ENCODE measurements at regions of chr2 and their contacts with region 1.

Region 1: GRCh38 chr2:38740851-38741731 is 10.1 kb downstream of the SRSF7 start:
- DNase-seq: no peak
- ATAC-seq: peak in 6 of 8 donors; percentile 12 to 47 (median 26)
- H3K4me3 ChIP-seq: peak overlapping the region in 1 of 10 donors; percentile 9
- H3K27ac ChIP-seq: peak overlapping the region in 5 of 10 donors; percentile 14 to 40 (median 38)
- H3K4me1 ChIP-seq: peaks cover 0 to 58% (median 37%) of the 10 kb centered on the region in 9 donors
- H3K27me3 ChIP-seq: no peaks in the 10 kb centered on the region
- CTCF ChIP-seq: peak; percentile 48 to 76 (median 64)

Region 2: GRCh38 chr2:38672445-38673391 is 68.4 kb before region 1 on chr2:
- intact Hi-C with region 1: loop called in 1 of 10 experiments (anchors 5 kb)
- DNase-seq: no peak
- ATAC-seq: no peak
- H3K4me3 ChIP-seq: no peak overlapping the region
- H3K27ac ChIP-seq: no peak overlapping the region
- H3K4me1 ChIP-seq: peaks cover 0 to 31% (median 0%) of the 10 kb centered on the region in 9 donors
- H3K27me3 ChIP-seq: no peaks in the 10 kb centered on the region
- CTCF ChIP-seq: no peak

Region 3: GRCh38 chr2:38690499-38691294 is 50.4 kb before region 1 on chr2:
- intact Hi-C with region 1: no loop called
- DNase-seq: no peak
- ATAC-seq: no peak
- H3K4me3 ChIP-seq: no peak overlapping the region
- H3K27ac ChIP-seq: peak overlapping the region in 1 of 10 donors; percentile 28
- H3K4me1 ChIP-seq: peaks cover 0 to 28% (median 0%) of the 10 kb centered on the region in 9 donors
- H3K27me3 ChIP-seq: no peaks in the 10 kb centered on the region
- CTCF ChIP-seq: no peak

Region 4: DNA sequence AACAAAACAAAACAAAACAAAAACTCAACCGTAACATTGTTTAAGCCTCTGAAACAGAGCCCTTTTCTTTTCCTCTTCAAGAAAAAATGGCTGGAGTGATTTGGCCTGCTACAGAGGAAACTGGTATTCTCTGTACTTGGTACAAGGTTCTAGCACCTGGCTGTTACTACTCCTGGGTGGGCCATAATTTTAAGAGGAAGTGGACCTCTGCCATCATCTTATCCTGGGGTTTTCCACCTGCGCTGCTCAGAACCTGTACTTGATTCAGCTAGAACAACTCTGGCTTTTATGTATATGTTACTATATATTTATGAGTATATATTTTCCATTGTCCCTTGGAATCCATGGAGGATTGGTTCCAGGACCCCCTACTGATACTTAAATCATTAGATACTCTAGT is 12.4 kb before region 1 on chr2:
- intact Hi-C with region 1: loop called in 3 of 10 experiments (anchors 1 to 2 kb)
- DNase-seq: no peak
- ATAC-seq: no peak
- H3K4me3 ChIP-seq: no peak overlapping the region
- H3K27ac ChIP-seq: no peak overlapping the region
- H3K4me1 ChIP-seq: peaks cover 0 to 4% (median under 1%) of the 10 kb centered on the region in 9 donors
- H3K27me3 ChIP-seq: no peaks in the 10 kb centered on the region
- CTCF ChIP-seq: no peak